Caco-2 (cell line): ENCODE measurements at regions of chr2 and their contacts with region 1.

Region 1: GRCh38 chr2:234363011-234363487 is 133.8 kb downstream of the ARL4C start:
- DNase-seq: peak; percentile 92 to 97
- H3K4me3 ChIP-seq: no peak overlapping the region
- H3K4me3 Mint-ChIP-seq: peak overlapping the region; percentile 60
- H3K27ac Mint-ChIP-seq: peak overlapping the region; percentile 92
- H3K4me1 ChIP-seq: peaks cover 67% of the 10 kb centered on the region
- H3K4me1 Mint-ChIP-seq: peaks cover 37% of the 10 kb centered on the region
- H3K27me3 ChIP-seq: no peaks in the 10 kb centered on the region
- H3K27me3 Mint-ChIP-seq: no peaks in the 10 kb centered on the region
- CTCF ChIP-seq: no peak

Region 2: DNA sequence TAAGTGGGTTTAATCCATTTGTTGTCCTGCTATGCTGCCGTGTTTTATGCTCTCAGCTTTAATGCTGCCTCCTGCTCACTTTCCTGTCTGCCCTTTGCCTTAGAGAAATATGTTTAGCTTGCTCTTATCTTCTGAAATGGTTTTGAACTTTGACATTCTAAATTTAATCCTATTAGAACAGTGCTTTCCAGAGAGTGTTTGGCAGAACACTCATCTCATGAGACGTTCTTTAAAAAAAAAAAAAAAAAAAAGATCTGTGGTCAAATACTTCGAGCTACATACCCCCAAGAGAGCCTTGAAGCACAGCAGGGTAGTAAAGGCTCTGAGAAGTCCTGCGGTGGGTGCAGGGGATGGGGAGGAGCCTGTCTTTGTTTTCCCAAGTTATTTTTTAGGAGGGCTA is 151.3 kb before region 1 on chr2:
- CTCF ChIA-PET with region 1: no interaction called
- POLR2A ChIA-PET with region 1: no interaction called
- intact Hi-C with region 1: no loop called
- DNase-seq: no peak
- H3K4me3 ChIP-seq: no peak overlapping the region
- H3K4me3 Mint-ChIP-seq: peak overlapping the region; percentile 50
- H3K27ac Mint-ChIP-seq: peak overlapping the region; percentile 47
- H3K4me1 ChIP-seq: peaks cover 21% of the 10 kb centered on the region
- H3K4me1 Mint-ChIP-seq: peaks cover 16% of the 10 kb centered on the region
- H3K27me3 ChIP-seq: no peaks in the 10 kb centered on the region
- H3K27me3 Mint-ChIP-seq: no peaks in the 10 kb centered on the region
- CTCF ChIP-seq: no peak

Region 3: GRCh38 chr2:234257856-234258561 is 105.0 kb before region 1 on chr2:
- CTCF ChIA-PET with region 1: no interaction called
- POLR2A ChIA-PET with region 1: no interaction called
- intact Hi-C with region 1: loop called (anchors 1 kb)
- DNase-seq: peak; percentile 72 to 84
- H3K4me3 ChIP-seq: no peak overlapping the region
- H3K4me3 Mint-ChIP-seq: peak overlapping the region; percentile 47
- H3K27ac Mint-ChIP-seq: peak overlapping the region; percentile 89
- H3K4me1 ChIP-seq: peaks cover 45% of the 10 kb centered on the region
- H3K4me1 Mint-ChIP-seq: peaks cover 17% of the 10 kb centered on the region
- H3K27me3 ChIP-seq: no peaks in the 10 kb centered on the region
- H3K27me3 Mint-ChIP-seq: no peaks in the 10 kb centered on the region
- CTCF ChIP-seq: peak; percentile 46 to 70

Region 4: GRCh38 chr2:234288974-234289455 is 74.0 kb before region 1 on chr2:
- CTCF ChIA-PET with region 1: interaction called, 6 read pairs
- POLR2A ChIA-PET with region 1: no interaction called
- intact Hi-C with region 1: loop called (anchors 1 kb)
- DNase-seq: peak; percentile 53 to 59
- H3K4me3 ChIP-seq: no peak overlapping the region
- H3K4me3 Mint-ChIP-seq: no peak overlapping the region
- H3K27ac Mint-ChIP-seq: peak overlapping the region; percentile 29
- H3K4me1 ChIP-seq: peaks cover 25% of the 10 kb centered on the region
- H3K4me1 Mint-ChIP-seq: peaks cover 22% of the 10 kb centered on the region
- H3K27me3 ChIP-seq: no peaks in the 10 kb centered on the region
- H3K27me3 Mint-ChIP-seq: no peaks in the 10 kb centered on the region
- CTCF ChIP-seq: peak; percentile 43 to 44

Region 5: GRCh38 chr2:234411793-234412192 is 48.7 kb after region 1 on chr2:
- CTCF ChIA-PET with region 1: no interaction called
- POLR2A ChIA-PET with region 1: interaction called, 10 read pairs
- intact Hi-C with region 1: loop called (anchors 1 kb)
- DNase-seq: no peak
- H3K4me3 ChIP-seq: no peak overlapping the region
- H3K4me3 Mint-ChIP-seq: no peak overlapping the region
- H3K27ac Mint-ChIP-seq: peak overlapping the region; percentile 94
- H3K4me1 ChIP-seq: peaks cover 44% of the 10 kb centered on the region
- H3K4me1 Mint-ChIP-seq: peaks cover 36% of the 10 kb centered on the region
- H3K27me3 ChIP-seq: no peaks in the 10 kb centered on the region
- H3K27me3 Mint-ChIP-seq: no peaks in the 10 kb centered on the region
- CTCF ChIP-seq: no peak

Region 6: GRCh38 chr2:234446404-234447076 is 83.5 kb after region 1 on chr2:
- CTCF ChIA-PET with region 1: interaction called, 4 read pairs
- POLR2A ChIA-PET with region 1: no interaction called
- intact Hi-C with region 1: loop called (anchors 1 kb)
- DNase-seq: no peak
- H3K4me3 ChIP-seq: no peak overlapping the region
- H3K4me3 Mint-ChIP-seq: no peak overlapping the region
- H3K27ac Mint-ChIP-seq: peak overlapping the region; percentile 89
- H3K4me1 ChIP-seq: peaks cover 39% of the 10 kb centered on the region
- H3K4me1 Mint-ChIP-seq: peaks cover 15% of the 10 kb centered on the region
- H3K27me3 ChIP-seq: no peaks in the 10 kb centered on the region
- H3K27me3 Mint-ChIP-seq: no peaks in the 10 kb centered on the region
- CTCF ChIP-seq: no peak

Region 7: GRCh38 chr2:234463626-234464290 is 100.7 kb after region 1 on chr2:
- CTCF ChIA-PET with region 1: interaction called, 3 read pairs
- POLR2A ChIA-PET with region 1: no interaction called
- intact Hi-C with region 1: loop called (anchors 1 kb)
- DNase-seq: peak; percentile 51 to 67
- H3K4me3 ChIP-seq: no peak overlapping the region
- H3K4me3 Mint-ChIP-seq: peak overlapping the region; percentile 47
- H3K27ac Mint-ChIP-seq: peak overlapping the region; percentile 95
- H3K4me1 ChIP-seq: peaks cover 70% of the 10 kb centered on the region
- H3K4me1 Mint-ChIP-seq: peaks cover 33% of the 10 kb centered on the region
- H3K27me3 ChIP-seq: no peaks in the 10 kb centered on the region
- H3K27me3 Mint-ChIP-seq: no peaks in the 10 kb centered on the region
- CTCF ChIP-seq: no peak

Region 8: GRCh38 chr2:234500394-234501006 is 137.5 kb after region 1 on chr2:
- CTCF ChIA-PET with region 1: interaction called, 3 read pairs
- POLR2A ChIA-PET with region 1: interaction called, 9 read pairs
- intact Hi-C with region 1: loop called (anchors 2 kb)
- DNase-seq: peak; percentile 56 to 60
- H3K4me3 ChIP-seq: no peak overlapping the region
- H3K4me3 Mint-ChIP-seq: no peak overlapping the region
- H3K27ac Mint-ChIP-seq: no peak overlapping the region
- H3K4me1 ChIP-seq: peaks cover 6% of the 10 kb centered on the region
- H3K4me1 Mint-ChIP-seq: peaks cover 8% of the 10 kb centered on the region
- H3K27me3 ChIP-seq: no peaks in the 10 kb centered on the region
- H3K27me3 Mint-ChIP-seq: no peaks in the 10 kb centered on the region
- CTCF ChIP-seq: peak; percentile 34 to 46